GM12878 (cell line): ENCODE measurements at regions of chr6 and their contacts with region 1.

Region 1: DNA sequence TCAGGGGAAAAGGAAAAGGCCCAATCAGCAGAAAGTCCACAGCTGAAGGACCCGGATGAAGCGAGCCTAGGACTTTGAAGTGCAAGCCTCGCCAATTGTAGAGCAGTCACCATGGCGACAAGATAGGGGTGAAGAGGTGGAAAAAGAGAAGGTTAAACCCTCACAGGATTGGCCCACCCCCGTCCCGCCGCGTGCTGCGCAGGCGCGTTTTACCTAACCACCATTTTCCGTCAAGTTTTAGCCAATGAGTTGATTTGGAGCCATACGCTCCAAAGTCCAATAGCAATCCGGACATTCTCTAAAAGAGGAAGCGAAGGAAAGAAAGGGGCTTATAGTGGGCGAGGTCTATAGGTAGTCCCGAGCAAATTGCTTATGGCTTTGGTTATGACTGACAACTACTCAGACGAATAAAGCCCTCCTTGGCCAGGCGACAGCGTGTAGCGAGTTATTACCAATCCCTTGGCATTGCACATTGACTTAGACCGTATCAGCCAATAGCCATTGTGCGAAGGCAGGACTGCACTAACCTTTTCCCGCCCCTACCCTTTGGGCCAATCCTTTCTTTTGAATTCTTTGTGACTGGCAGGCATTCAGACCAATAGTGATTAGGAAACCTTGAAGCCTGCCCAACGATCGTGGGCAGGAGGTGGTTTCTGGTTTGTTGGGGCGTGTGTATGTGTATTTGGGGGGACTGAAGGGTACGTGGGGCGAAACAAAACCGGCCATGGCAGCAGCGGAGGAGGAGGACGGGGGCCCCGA is at the start of gene RNF5:
- DNase-seq: peak; percentile 100
- ATAC-seq: peak; percentile 91
- H3K4me3 ChIP-seq: peak within 1 kb of the TSS; percentile 86
- H3K27ac ChIP-seq: peak within 1 kb of the TSS; percentile 79
- H3K4me1 ChIP-seq: peaks cover 10% of the 10 kb centered on the region
- H3K27me3 ChIP-seq: no peaks in the 10 kb centered on the region
- CTCF ChIP-seq: no peak
- EP300 ChIP-seq: no peak
- POLR2A ChIP-seq: no peak; the same call in none of the 2 replicates
- RAD21 ChIP-seq: no peak
- polyA plus RNA-seq, gene RNF5: 31.4 to 42.0 TPM

Region 2: DNA sequence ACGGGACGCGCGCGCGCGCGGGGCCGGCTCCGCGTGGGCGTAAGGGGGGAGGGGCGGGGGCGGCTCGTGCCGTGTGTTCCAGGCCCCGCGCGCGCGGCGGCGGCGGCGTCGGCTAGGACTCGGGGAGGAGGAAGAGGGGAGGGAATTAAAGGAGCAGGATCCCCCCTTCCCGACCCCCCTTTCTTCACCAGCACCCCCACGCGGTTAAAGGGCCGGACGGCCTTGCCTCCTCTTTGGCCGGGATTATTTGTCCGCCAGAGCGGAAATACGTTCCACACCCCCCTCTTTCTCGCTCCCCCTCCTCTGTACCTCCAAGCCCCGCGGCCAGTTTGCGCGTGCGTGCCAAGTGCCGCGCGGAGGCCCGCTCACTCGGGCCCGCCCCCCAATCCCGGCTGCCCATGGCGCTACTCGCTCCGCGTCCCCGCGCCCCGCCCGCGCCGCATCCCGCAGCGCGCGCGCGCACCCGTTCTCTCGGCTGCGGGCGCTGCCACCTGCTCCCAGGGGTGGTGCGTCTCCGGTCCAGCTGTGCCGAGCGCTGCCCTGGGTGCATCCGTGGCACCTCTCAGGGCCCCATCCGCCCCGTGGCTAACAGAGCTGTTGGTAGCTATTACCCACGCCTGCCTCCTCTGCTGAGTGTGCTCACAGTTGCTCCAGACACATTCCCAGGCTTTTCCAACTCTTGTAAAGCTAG is 275.9 kb before region 1 on chr6 and contains the start of gene ZBTB12:
- CTCF ChIA-PET with region 1: no interaction called
- POLR2A ChIA-PET with region 1: no interaction called
- RAD21 ChIA-PET with region 1: no interaction called
- SMC1A ChIA-PET with region 1: no interaction called
- in situ Hi-C with region 1: no loop called
- intact Hi-C with region 1: no loop called
- DNase-seq: peak; percentile 73
- ATAC-seq: peak; percentile 81
- H3K4me3 ChIP-seq: peak within 1 kb of the TSS; percentile 89
- H3K27ac ChIP-seq: peak within 1 kb of the TSS; percentile 49
- H3K4me1 ChIP-seq: peaks cover 11% of the 10 kb centered on the region
- H3K27me3 ChIP-seq: no peaks in the 10 kb centered on the region
- CTCF ChIP-seq: no peak
- EP300 ChIP-seq: no peak
- POLR2A ChIP-seq: peak; percentile 72
- RAD21 ChIP-seq: no peak
- polyA plus RNA-seq, gene ZBTB12: not detected

Region 3: DNA sequence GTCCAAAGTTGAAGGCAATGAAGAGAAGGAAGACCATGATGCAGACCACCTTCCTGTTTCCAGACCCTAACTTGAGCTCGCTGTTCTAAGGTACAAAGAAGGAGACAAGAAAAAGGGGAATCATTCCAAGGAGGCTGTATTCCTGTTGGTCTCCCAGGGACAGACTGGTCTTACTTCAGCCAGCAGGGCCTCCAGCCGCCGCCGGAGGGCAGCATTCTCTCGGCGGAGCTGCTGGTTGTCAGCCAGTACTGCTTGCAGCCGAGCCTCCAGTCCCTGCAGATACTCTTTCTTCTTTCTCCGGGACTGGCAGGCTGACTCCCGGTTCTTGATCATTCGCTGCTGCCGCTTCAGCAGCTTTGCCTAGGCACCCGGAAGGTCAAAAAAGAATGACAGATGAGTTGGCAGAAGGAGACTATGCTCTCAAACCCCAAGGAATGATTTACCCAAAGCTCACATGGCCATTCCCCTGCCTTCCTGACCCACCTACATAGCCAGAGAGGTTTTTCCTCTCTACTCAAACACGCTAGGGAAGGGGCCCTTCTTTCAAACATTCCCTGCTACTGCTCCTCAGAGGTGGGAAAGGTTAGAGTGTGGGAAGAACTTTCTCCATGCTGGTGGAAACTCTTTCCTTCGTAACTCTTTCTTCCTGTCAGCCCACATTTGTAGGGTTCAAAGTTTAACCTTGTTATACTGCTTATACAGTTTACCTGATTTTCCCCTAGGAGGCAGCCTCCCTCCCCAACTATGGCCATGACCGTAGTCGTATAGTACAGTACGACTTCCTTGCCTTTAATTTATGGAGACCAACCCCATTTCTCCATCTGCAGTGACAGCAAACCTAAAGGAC is 59.0 kb before region 1 on chr6:
- CTCF ChIA-PET with region 1: interaction called, 5 read pairs
- POLR2A ChIA-PET with region 1: interaction called, 3 read pairs
- RAD21 ChIA-PET with region 1: no interaction called
- SMC1A ChIA-PET with region 1: no interaction called
- in situ Hi-C with region 1: no loop called
- intact Hi-C with region 1: loop called (anchors 2 kb)
- DNase-seq: peak; percentile 24
- ATAC-seq: peak; percentile 99
- H3K4me3 ChIP-seq: no peak overlapping the region
- H3K27ac ChIP-seq: no peak overlapping the region
- H3K4me1 ChIP-seq: no peaks in the 10 kb centered on the region
- H3K27me3 ChIP-seq: no peaks in the 10 kb centered on the region
- CTCF ChIP-seq: peak; percentile 93 to 96 (median 95)
- EP300 ChIP-seq: no peak
- POLR2A ChIP-seq: no peak; the same call in 1 of the 2 replicates
- RAD21 ChIP-seq: peak; percentile 73

Region 4: GRCh38 chr6:32127717-32128592 is 50.0 kb before region 1 on chr6 and contains the start of gene ATF6B:
- CTCF ChIA-PET with region 1: interaction called, 4 read pairs
- POLR2A ChIA-PET with region 1: interaction called, 35 read pairs
- RAD21 ChIA-PET with region 1: interaction called, 5 read pairs
- SMC1A ChIA-PET with region 1: interaction called, 15 read pairs
- in situ Hi-C with region 1: no loop called
- intact Hi-C with region 1: no loop called
- DNase-seq: peak; percentile 97
- ATAC-seq: peak; percentile 95
- H3K4me3 ChIP-seq: peak within 1 kb of the TSS; percentile 88
- H3K27ac ChIP-seq: peak within 1 kb of the TSS; percentile 95
- H3K4me1 ChIP-seq: peaks cover 13% of the 10 kb centered on the region
- H3K27me3 ChIP-seq: no peaks in the 10 kb centered on the region
- CTCF ChIP-seq: no peak
- EP300 ChIP-seq: no peak
- POLR2A ChIP-seq: peak; percentile 91
- RAD21 ChIP-seq: no peak
- polyA plus RNA-seq, gene ATF6B: 13.6 to 16.0 TPM

Region 5: DNA sequence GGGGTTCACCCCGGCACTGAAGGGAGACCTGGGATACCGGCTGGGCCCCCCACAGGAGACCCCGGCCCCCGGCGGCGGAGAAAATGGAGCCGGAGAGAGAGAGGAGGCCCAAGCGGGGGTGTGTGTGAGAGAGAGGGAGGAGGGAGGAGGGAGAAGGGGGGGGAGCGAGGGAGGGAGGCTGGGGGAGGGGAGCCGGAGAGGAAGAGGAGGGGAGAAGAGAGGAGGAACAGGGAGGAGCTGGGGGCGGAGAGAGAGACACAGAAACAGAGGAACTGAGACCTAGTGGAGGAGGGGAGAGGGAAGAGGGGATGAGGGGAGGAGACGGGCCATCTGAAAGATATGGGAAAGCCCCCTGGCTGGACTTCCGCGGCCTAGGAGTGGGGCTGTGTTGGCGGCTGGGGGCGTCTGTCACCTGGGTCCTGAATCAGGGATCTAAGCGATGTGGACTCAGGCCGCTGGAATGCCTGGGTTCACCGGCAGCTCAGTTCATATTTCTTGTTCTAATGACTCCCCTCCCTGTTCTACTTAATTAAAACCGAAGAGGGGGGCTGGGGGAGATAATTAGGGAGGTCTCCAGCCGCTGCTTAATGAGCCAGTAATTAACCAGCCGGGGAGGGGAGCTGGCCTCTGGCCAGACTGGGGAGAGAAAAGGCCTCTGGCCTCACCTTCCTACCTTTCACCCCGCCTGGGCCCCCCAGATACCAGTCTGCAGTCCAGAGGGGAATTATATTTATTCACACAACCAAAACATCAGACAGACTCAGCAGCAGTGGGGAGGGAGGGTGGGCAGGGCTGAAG is 12.3 kb after region 1 on chr6 and contains the start of gene PBX2:
- CTCF ChIA-PET with region 1: interaction called, 19 read pairs
- POLR2A ChIA-PET with region 1: interaction called, 123 read pairs
- RAD21 ChIA-PET with region 1: interaction called, 21 read pairs
- SMC1A ChIA-PET with region 1: interaction called, 41 read pairs
- in situ Hi-C with region 1: no loop called
- intact Hi-C with region 1: loop called (anchors 2 kb)
- DNase-seq: peak; percentile 91
- ATAC-seq: peak; percentile 79
- H3K4me3 ChIP-seq: peak within 1 kb of the TSS; percentile 90
- H3K27ac ChIP-seq: peak within 1 kb of the TSS; percentile 100
- H3K4me1 ChIP-seq: peaks cover 39% of the 10 kb centered on the region
- H3K27me3 ChIP-seq: no peaks in the 10 kb centered on the region
- CTCF ChIP-seq: 0 out of 6 replicates have a peak, but pooled peaks of 1 of the 3 experiments have one; percentile 2
- EP300 ChIP-seq: peak; percentile 22 to 27; a peak in 2 of 4 replicates
- POLR2A ChIP-seq: peak; percentile 70
- RAD21 ChIP-seq: no peak
- polyA plus RNA-seq, gene PBX2: 0.84 to 1.2 TPM